T-cell (primary cell): ENCODE measurements at regions of chr5 and their contacts with region 1.

Region 1: GRCh38 chr5:76920491-76920890 is 32.4 kb upstream of the CRHBP start:
- DNase-seq: no peak
- ATAC-seq: no peak
- H3K4me3 ChIP-seq: no peak overlapping the region
- H3K4me3 Mint-ChIP-seq: no peak overlapping the region
- H3K27ac ChIP-seq: no peak overlapping the region
- H3K27ac Mint-ChIP-seq: no peak overlapping the region
- H3K4me1 ChIP-seq: no peaks in the 10 kb centered on the region
- H3K4me1 Mint-ChIP-seq: no peaks in the 10 kb centered on the region
- H3K27me3 ChIP-seq: no peaks in the 10 kb centered on the region
- H3K27me3 Mint-ChIP-seq: no peaks in the 10 kb centered on the region

Region 2: DNA sequence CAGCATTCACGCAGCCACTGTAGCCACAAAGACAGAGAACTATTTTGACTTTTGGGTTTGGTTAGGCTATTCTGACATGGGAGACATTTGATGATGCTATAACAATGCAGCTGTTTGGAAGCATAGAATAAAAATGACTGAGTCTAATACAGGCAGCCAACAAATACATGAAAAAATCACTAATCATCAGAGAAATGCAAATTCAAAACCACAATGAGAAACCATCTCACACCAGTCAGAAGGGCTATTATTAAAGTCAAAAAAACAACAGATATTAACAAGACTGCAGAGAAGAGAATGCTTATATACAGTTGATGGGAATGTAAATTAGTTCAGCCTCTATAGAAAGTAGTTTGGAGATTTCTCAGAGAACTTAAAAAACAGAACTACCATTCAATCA is 1096.2 kb before region 1 on chr5:
- CTCF ChIA-PET with region 1: interaction called in 1 of 2 experiments, 10 read pairs
- POLR2A ChIA-PET with region 1: no interaction called
- DNase-seq: no peak
- ATAC-seq: no peak
- H3K4me3 ChIP-seq: no peak overlapping the region
- H3K4me3 Mint-ChIP-seq: no peak overlapping the region
- H3K27ac ChIP-seq: no peak overlapping the region
- H3K27ac Mint-ChIP-seq: no peak overlapping the region
- H3K4me1 ChIP-seq: no peaks in the 10 kb centered on the region
- H3K4me1 Mint-ChIP-seq: no peaks in the 10 kb centered on the region
- H3K27me3 ChIP-seq: no peaks in the 10 kb centered on the region
- H3K27me3 Mint-ChIP-seq: peaks cover 3 to 4% of the 10 kb centered on the region in 2 donors